CD14-positive monocyte (primary cell): ENCODE measurements at regions of chr11 and their contacts with region 1.

Region 1: GRCh38 chr11:77047007-77047927 is 13.1 kb downstream of the B3GNT6 start:
- DNase-seq: peak; percentile 84 to 93 (median 91)
- H3K4me3 ChIP-seq: peak overlapping the region; percentile 43 to 73 (median 45)
- H3K4me3 Mint-ChIP-seq: peak overlapping the region; percentile 61 to 78
- H3K27ac ChIP-seq: no peak overlapping the region
- H3K27ac Mint-ChIP-seq: peak overlapping the region in 3 of 7 donors; percentile 54 to 86 (median 74)
- H3K4me1 ChIP-seq: peaks cover 10 to 14% of the 10 kb centered on the region in 2 donors
- H3K4me1 Mint-ChIP-seq: peaks cover 13% of the 10 kb centered on the region
- H3K27me3 ChIP-seq: peaks cover 8 to 23% of the 10 kb centered on the region in 2 donors
- H3K27me3 Mint-ChIP-seq: peaks cover 14 to 26% (median 24%) of the 10 kb centered on the region in 3 donors
- CTCF ChIP-seq: peak; percentile 56

Region 2: GRCh38 chr11:76946245-76946644 is 101.0 kb before region 1 on chr11:
- intact Hi-C with region 1: no loop called
- DNase-seq: no peak
- H3K4me3 ChIP-seq: no peak overlapping the region
- H3K4me3 Mint-ChIP-seq: no peak overlapping the region
- H3K27ac ChIP-seq: no peak overlapping the region
- H3K27ac Mint-ChIP-seq: peak overlapping the region in 2 of 7 donors; percentile 24 to 37
- H3K4me1 ChIP-seq: no peaks in the 10 kb centered on the region
- H3K4me1 Mint-ChIP-seq: peaks cover 5% of the 10 kb centered on the region
- H3K27me3 ChIP-seq: no peaks in the 10 kb centered on the region
- H3K27me3 Mint-ChIP-seq: no peaks in the 10 kb centered on the region
- CTCF ChIP-seq: no peak

Region 3: DNA sequence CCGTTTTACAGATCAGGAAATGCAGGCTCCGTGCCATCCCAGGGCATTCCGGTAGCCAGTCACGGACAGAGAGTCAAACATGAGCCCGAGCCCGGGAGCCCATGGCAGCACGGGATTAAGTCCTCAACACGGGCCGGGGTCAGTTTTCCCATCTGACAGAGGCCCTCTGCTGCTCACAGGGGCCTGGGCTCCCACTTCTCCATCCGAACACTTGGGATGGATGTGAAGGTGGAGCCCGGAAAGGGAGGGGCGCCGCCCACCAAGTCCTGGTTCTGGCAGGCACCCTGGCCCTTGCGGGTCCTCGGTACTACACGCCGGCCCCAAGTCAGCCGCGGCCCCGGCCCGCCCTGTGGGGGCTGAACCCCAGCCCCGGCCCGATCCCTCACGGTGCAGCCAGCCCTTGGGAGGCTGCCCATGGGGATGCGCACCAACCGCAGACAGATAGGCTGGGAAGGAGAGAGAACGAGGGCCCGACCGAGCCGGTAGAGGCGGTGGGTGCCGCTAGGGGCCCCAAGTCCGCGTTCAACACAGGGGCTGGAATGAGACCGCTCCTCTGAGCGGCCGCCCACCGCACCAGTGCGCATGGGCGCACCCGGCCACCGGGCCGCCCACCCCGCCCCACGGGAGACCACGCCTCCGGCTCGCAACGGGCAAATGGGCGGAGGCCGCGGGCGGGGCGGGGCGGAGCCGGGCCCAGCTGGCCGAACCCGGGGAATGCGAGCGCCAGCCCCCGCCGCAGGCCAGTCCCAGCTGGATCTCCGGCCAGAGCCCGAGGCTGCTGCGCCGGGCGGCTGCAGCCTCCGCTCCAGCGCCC is 19.2 kb after region 1 on chr11 and contains the start of gene CAPN5:
- intact Hi-C with region 1: loop called in 1 of 2 experiments (anchors 2 kb)
- DNase-seq: peak; percentile 76 to 83 (median 80)
- H3K4me3 ChIP-seq: peak within 1 kb of the TSS; percentile 50 to 84 (median 62)
- H3K4me3 Mint-ChIP-seq: peak within 1 kb of the TSS; percentile 89 to 96
- H3K27ac ChIP-seq: no peak within 1 kb of the TSS
- H3K27ac Mint-ChIP-seq: peak within 1 kb of the TSS in 5 of 7 donors; percentile 4 to 78 (median 63)
- H3K4me1 ChIP-seq: peaks cover 14 to 18% of the 10 kb centered on the region in 2 donors
- H3K4me1 Mint-ChIP-seq: peaks cover 12% of the 10 kb centered on the region
- H3K27me3 ChIP-seq: peaks cover 0 to 10% of the 10 kb centered on the region in 2 donors
- H3K27me3 Mint-ChIP-seq: peaks cover 13 to 22% (median 19%) of the 10 kb centered on the region in 3 donors
- CTCF ChIP-seq: peak; percentile 13
- polyA plus RNA-seq, gene CAPN5: 0.28 to 0.83 (median 0.62) TPM

Region 4: GRCh38 chr11:77091146-77091940 is 44.1 kb after region 1 on chr11:
- intact Hi-C with region 1: loop called (anchors 2 kb)
- DNase-seq: peak; percentile 39 to 56 (median 45)
- H3K4me3 ChIP-seq: no peak overlapping the region
- H3K4me3 Mint-ChIP-seq: no peak overlapping the region
- H3K27ac ChIP-seq: no peak overlapping the region
- H3K27ac Mint-ChIP-seq: no peak overlapping the region
- H3K4me1 ChIP-seq: no peaks in the 10 kb centered on the region
- H3K4me1 Mint-ChIP-seq: no peaks in the 10 kb centered on the region
- H3K27me3 ChIP-seq: no peaks in the 10 kb centered on the region
- H3K27me3 Mint-ChIP-seq: peaks cover 0 to 5% (median 2%) of the 10 kb centered on the region in 3 donors
- CTCF ChIP-seq: peak; percentile 89

Region 5: GRCh38 chr11:77187776-77188632 is 140.7 kb after region 1 on chr11:
- intact Hi-C with region 1: loop called in 1 of 2 experiments (anchors 5 kb)
- DNase-seq: peak; percentile 63 to 75 (median 71)
- H3K4me3 ChIP-seq: no peak overlapping the region
- H3K4me3 Mint-ChIP-seq: no peak overlapping the region
- H3K27ac ChIP-seq: no peak overlapping the region
- H3K27ac Mint-ChIP-seq: peak overlapping the region in 1 of 7 donors; percentile 1
- H3K4me1 ChIP-seq: no peaks in the 10 kb centered on the region
- H3K4me1 Mint-ChIP-seq: peaks cover 7% of the 10 kb centered on the region
- H3K27me3 ChIP-seq: no peaks in the 10 kb centered on the region
- H3K27me3 Mint-ChIP-seq: peaks cover 0 to 6% (median 0%) of the 10 kb centered on the region in 3 donors
- CTCF ChIP-seq: peak; percentile 93